PC-9 (cell line): ENCODE measurements at regions of chr11 and their contacts with region 1.

Region 1: GRCh38 chr11:26556581-26556980 is 15.5 kb downstream of the MUC15 start:
- DNase-seq: peak; percentile 22 to 68
- H3K4me3 ChIP-seq: no peak overlapping the region
- H3K27ac ChIP-seq: peak overlapping the region; percentile 55
- H3K4me1 ChIP-seq: peaks cover 12% of the 10 kb centered on the region
- H3K27me3 ChIP-seq: no peaks in the 10 kb centered on the region
- CTCF ChIP-seq: no peak

Region 2: DNA sequence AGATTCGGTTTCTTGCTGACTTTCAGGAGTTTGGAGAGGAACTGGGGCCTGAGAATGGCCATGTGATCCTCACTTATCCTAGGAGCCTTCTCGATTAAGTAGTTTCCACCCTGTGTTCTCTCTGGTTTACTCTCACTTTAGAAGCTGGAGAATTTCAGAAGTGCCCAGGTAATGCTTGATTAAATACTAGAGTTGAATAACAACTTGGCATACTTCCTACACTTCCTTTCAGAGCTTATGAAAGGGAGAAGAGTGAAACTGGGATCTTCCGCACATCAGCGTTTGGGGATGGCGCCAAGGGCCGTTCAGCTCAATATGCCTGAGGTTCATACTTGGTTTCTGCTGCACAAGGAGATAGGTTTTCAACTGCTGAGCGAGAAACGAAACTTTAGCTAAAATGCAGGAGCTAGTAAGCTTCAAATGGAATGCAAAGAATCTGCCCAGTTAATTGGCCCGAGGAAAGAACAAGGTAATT is 16.2 kb after region 1 on chr11:
- CTCF ChIA-PET with region 1: no interaction called
- POLR2A ChIA-PET with region 1: no interaction called
- intact Hi-C with region 1: no loop called
- DNase-seq: peak in 1 of 2 experiments; percentile 11
- H3K4me3 ChIP-seq: no peak overlapping the region
- H3K27ac ChIP-seq: no peak overlapping the region
- H3K4me1 ChIP-seq: peaks cover 14% of the 10 kb centered on the region
- H3K27me3 ChIP-seq: no peaks in the 10 kb centered on the region
- CTCF ChIP-seq: no peak

Region 3: DNA sequence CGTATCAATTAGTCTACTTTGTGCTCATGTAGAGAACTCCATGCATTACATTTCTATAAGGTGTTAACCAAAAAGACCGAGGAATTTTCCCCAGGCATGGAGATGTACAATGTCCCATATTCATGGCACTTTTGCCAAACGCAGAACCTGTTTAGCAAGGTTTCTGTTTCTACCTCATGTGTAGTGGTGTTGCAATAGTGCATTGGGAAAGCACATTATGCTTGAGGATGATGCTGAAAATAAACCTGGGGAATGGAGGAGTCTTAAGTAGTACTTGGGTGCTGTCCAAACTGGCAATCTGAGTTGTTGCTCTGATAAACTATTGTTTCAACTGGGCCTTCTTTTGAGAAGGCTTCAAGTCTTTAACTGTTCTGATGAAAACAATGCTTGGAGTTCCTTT is 27.0 kb after region 1 on chr11:
- CTCF ChIA-PET with region 1: no interaction called
- POLR2A ChIA-PET with region 1: no interaction called
- intact Hi-C with region 1: loop called (anchors 2 kb)
- DNase-seq: peak; percentile 38 to 82
- H3K4me3 ChIP-seq: no peak overlapping the region
- H3K27ac ChIP-seq: no peak overlapping the region
- H3K4me1 ChIP-seq: peaks cover 54% of the 10 kb centered on the region
- H3K27me3 ChIP-seq: no peaks in the 10 kb centered on the region
- CTCF ChIP-seq: no peak

Region 4: GRCh38 chr11:26677566-26677965 is 121.0 kb after region 1 on chr11:
- CTCF ChIA-PET with region 1: no interaction called
- POLR2A ChIA-PET with region 1: no interaction called
- intact Hi-C with region 1: loop called (anchors 1 kb)
- DNase-seq: peak in 1 of 2 experiments; percentile 62
- H3K4me3 ChIP-seq: no peak overlapping the region
- H3K27ac ChIP-seq: no peak overlapping the region
- H3K4me1 ChIP-seq: no peaks in the 10 kb centered on the region
- H3K27me3 ChIP-seq: no peaks in the 10 kb centered on the region
- CTCF ChIP-seq: no peak